ENCODE measurements at regions of chr1 and their contacts with region 1.

Region 1: DNA sequence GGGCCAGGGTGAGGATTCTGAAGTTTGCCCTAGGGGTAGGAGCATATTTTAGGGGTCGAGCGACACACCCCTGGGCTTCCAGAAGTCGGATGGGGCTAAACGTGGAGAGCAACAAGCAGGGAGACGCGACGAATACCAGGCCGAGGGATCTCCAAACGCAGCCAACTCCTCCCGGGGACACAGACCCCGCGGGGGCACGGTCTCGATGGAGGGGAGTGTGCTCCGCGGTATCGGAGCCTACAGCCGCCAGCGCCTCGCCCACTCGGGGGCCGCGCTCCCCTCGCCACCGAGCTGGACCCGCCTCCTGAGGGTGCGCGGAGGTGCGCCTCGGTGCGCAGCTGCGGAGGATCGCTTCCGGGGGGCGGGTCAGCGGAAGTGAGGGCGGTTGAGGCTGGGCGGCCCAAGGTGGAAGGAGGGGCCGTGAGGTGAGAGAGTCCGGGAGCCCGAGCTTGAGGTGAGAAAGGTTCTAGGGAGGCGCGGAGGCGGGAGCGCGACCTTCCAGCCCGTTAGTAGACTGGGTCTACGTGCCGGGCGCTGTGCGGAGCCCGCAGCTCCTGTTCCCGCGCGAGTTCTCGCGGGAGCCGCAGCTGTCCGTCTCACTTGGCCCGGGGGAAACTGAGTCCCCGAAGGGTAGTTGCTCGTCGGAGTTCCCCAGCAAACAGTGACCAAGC is at the start of gene MTFR1L:
- DNase-seq: peak; percentile 66
- ATAC-seq: peak; percentile 95
- H3K4me3 ChIP-seq: peak within 1 kb of the TSS; percentile 83
- H3K27ac ChIP-seq: peak within 1 kb of the TSS; percentile 73
- H3K4me1 ChIP-seq: peaks cover 15% of the 10 kb centered on the region
- H3K27me3 ChIP-seq: no peaks in the 10 kb centered on the region
- CTCF ChIP-seq: no peak
- EP300 ChIP-seq: no peak
- POLR2A ChIP-seq: peak; percentile 89
- RAD21 ChIP-seq: no peak
- polyA plus RNA-seq, gene MTFR1L: 26.7 to 30.0 TPM

Region 2: GRCh38 chr1:25425098-25426085 is 394.3 kb before region 1 on chr1:
- CTCF ChIA-PET with region 1: no interaction called
- POLR2A ChIA-PET with region 1: no interaction called
- RAD21 ChIA-PET with region 1: no interaction called
- SMC1A ChIA-PET with region 1: interaction called, 4 read pairs
- in situ Hi-C with region 1: loop called (anchors 25 kb)
- intact Hi-C with region 1: no loop called
- DNase-seq: no peak
- ATAC-seq: no peak
- H3K4me3 ChIP-seq: no peak overlapping the region
- H3K27ac ChIP-seq: no peak overlapping the region
- H3K4me1 ChIP-seq: no peaks in the 10 kb centered on the region
- H3K27me3 ChIP-seq: no peaks in the 10 kb centered on the region
- CTCF ChIP-seq: no peak
- EP300 ChIP-seq: no peak
- POLR2A ChIP-seq: no peak
- RAD21 ChIP-seq: no peak

Region 3: DNA sequence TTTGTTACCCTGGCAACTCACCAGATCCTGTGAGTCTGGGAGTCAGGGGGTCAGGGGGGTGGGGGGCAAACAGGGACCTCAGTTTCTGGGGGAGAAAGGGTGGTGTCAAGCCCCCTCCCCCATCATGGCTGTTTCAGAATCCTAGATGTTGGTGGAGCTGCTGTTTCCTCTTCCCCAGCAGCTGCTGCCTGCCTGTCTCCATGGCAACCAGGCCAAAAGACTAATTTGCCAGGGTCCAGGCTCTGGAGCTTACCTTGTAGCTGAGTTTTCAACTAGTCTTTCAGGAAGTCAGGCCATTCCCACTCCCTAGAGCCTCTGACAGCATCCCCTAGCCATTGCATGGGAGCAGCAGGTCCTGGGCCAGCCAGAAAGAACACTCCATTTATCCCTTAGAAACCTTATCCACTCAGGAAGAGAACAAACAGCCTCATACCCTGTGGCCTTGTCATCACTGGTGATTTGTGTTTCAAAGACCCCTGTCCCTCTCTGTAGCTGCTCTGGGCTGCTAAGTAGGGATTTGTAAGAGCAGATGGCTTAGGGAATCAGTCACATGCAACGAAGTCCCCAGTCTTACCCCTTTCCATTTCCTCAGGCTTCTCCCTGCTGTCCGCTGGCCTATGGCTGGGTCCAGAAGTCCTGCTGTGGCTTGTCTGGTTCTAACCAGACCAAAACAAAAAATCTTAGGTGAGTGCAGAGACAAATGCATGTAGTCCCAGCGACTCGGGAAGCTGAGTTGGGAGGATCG is 108.0 kb after region 1 on chr1:
- CTCF ChIA-PET with region 1: no interaction called
- POLR2A ChIA-PET with region 1: no interaction called
- RAD21 ChIA-PET with region 1: no interaction called
- SMC1A ChIA-PET with region 1: no interaction called
- in situ Hi-C with region 1: no loop called
- intact Hi-C with region 1: no loop called
- DNase-seq: no peak
- ATAC-seq: no peak
- H3K4me3 ChIP-seq: no peak overlapping the region
- H3K27ac ChIP-seq: no peak overlapping the region
- H3K4me1 ChIP-seq: 0 out of 2 replicates have a peak, but pooled peaks cover 2% of the 10 kb centered on the region
- H3K27me3 ChIP-seq: peaks cover 0 to 12% of the 10 kb centered on the region in 2 experiments; a peak in 2 of 4 replicates
- CTCF ChIP-seq: no peak
- EP300 ChIP-seq: no peak
- POLR2A ChIP-seq: no peak
- RAD21 ChIP-seq: no peak

Region 4: GRCh38 chr1:26009796-26010460 is 190.2 kb after region 1 on chr1:
- CTCF ChIA-PET with region 1: no interaction called
- POLR2A ChIA-PET with region 1: no interaction called
- RAD21 ChIA-PET with region 1: no interaction called
- SMC1A ChIA-PET with region 1: no interaction called
- in situ Hi-C with region 1: no loop called
- intact Hi-C with region 1: loop called (anchors 10 kb)
- DNase-seq: no peak
- ATAC-seq: peak; percentile 64
- H3K4me3 ChIP-seq: no peak overlapping the region
- H3K27ac ChIP-seq: no peak overlapping the region
- H3K4me1 ChIP-seq: no peaks in the 10 kb centered on the region
- H3K27me3 ChIP-seq: no peaks in the 10 kb centered on the region; a peak in 1 of 4 replicates
- CTCF ChIP-seq: peak in 1 of 3 experiments; percentile 7; a peak in 1 of 6 replicates
- EP300 ChIP-seq: no peak
- POLR2A ChIP-seq: no peak
- RAD21 ChIP-seq: peak; percentile 10; the same call in 1 of the 2 replicates